ENCODE measurements at regions of chr11 and their contacts with region 1.

Region 1: GRCh38 chr11:10933455-10934292 is 75.8 kb upstream of the ZBED5 start:
- DNase-seq: peak; percentile 92
- ATAC-seq: peak; percentile 84
- H3K4me3 ChIP-seq: peak overlapping the region; percentile 40
- H3K27ac ChIP-seq: peak overlapping the region; percentile 41
- H3K4me1 ChIP-seq: peaks cover 5% of the 10 kb centered on the region
- H3K27me3 ChIP-seq: peaks cover 4% of the 10 kb centered on the region; the same call in 1 of the 2 replicates
- CTCF ChIP-seq: peak; percentile 98
- POLR2A ChIP-seq: peak; percentile 58; the same call in 1 of the 2 replicates
- RAD21 ChIP-seq: peak; percentile 93

Region 2: GRCh38 chr11:10797531-10797930 is 136.1 kb before region 1 on chr11:
- CTCF ChIA-PET with region 1: interaction called, 6 read pairs
- POLR2A ChIA-PET with region 1: no interaction called
- dilution Hi-C with region 1: no loop called
- in situ Hi-C with region 1: loop called (anchors 5 kb)
- intact Hi-C with region 1: loop called (anchors 5 kb)
- DNase-seq: no peak
- ATAC-seq: no peak
- H3K4me3 ChIP-seq: no peak overlapping the region
- H3K27ac ChIP-seq: no peak overlapping the region
- H3K4me1 ChIP-seq: no peaks in the 10 kb centered on the region
- H3K27me3 ChIP-seq: no peaks in the 10 kb centered on the region
- CTCF ChIP-seq: no peak
- POLR2A ChIP-seq: no peak
- RAD21 ChIP-seq: no peak

Region 3: GRCh38 chr11:10857709-10858438 is 75.8 kb before region 1 on chr11 and contains the start of gene ZBED5:
- CTCF ChIA-PET with region 1: interaction called, 3 read pairs
- POLR2A ChIA-PET with region 1: interaction called, 3 read pairs
- dilution Hi-C with region 1: no loop called
- in situ Hi-C with region 1: loop called (anchors 5 kb)
- intact Hi-C with region 1: loop called (anchors 1 kb)
- DNase-seq: peak; percentile 97
- ATAC-seq: peak; percentile 95
- H3K4me3 ChIP-seq: peak within 1 kb of the TSS; percentile 67
- H3K27ac ChIP-seq: peak within 1 kb of the TSS; percentile 95
- H3K4me1 ChIP-seq: no peaks in the 10 kb centered on the region
- H3K27me3 ChIP-seq: no peaks in the 10 kb centered on the region
- CTCF ChIP-seq: 0 out of 2 replicates have a peak, but pooled peaks have one; percentile 7
- POLR2A ChIP-seq: peak; percentile 92
- RAD21 ChIP-seq: peak; percentile 31
- total RNA-seq, gene ZBED5: 30.8 and 35.6 TPM in 2 replicates

Region 4: GRCh38 chr11:10943968-10944367 is 10.3 kb after region 1 on chr11:
- CTCF ChIA-PET with region 1: interaction called, 11 read pairs
- POLR2A ChIA-PET with region 1: no interaction called
- dilution Hi-C with region 1: no loop called
- in situ Hi-C with region 1: no loop called
- intact Hi-C with region 1: no loop called
- DNase-seq: no peak
- ATAC-seq: no peak
- H3K4me3 ChIP-seq: no peak overlapping the region
- H3K27ac ChIP-seq: no peak overlapping the region
- H3K4me1 ChIP-seq: no peaks in the 10 kb centered on the region
- H3K27me3 ChIP-seq: peaks cover 27% of the 10 kb centered on the region
- CTCF ChIP-seq: no peak
- POLR2A ChIP-seq: no peak
- RAD21 ChIP-seq: no peak

Region 5: GRCh38 chr11:11028017-11028692 is 94.5 kb after region 1 on chr11:
- CTCF ChIA-PET with region 1: interaction called, 12 read pairs
- POLR2A ChIA-PET with region 1: no interaction called
- dilution Hi-C with region 1: no loop called
- in situ Hi-C with region 1: no loop called
- intact Hi-C with region 1: no loop called
- DNase-seq: peak; percentile 44
- ATAC-seq: peak; percentile 85
- H3K4me3 ChIP-seq: no peak overlapping the region
- H3K27ac ChIP-seq: no peak overlapping the region
- H3K4me1 ChIP-seq: peaks cover 3% of the 10 kb centered on the region; the same call in 1 of the 2 replicates
- H3K27me3 ChIP-seq: peaks cover 10% of the 10 kb centered on the region
- CTCF ChIP-seq: peak; percentile 72
- POLR2A ChIP-seq: no peak
- RAD21 ChIP-seq: peak; percentile 74

Region 6: DNA sequence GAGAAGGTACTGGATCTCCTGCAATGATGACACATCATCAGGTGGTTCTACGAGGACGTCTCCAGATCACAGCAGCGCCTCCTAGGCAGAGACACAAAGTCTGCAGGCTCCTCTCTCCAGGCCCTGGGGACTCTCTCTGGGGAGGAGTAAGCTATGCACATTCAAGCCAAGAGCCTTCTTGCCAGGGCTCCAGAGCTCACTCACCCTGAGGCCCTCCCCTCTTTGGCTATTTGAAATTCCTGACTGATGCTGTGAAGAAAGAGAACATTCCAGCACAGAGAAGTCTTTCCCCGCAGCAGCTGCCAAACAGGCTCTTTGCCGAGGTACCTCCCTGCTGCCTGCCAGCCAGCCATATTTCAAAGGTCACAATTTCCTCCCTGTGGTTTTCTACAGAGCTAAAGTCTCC is 214.4 kb after region 1 on chr11:
- CTCF ChIA-PET with region 1: no interaction called
- POLR2A ChIA-PET with region 1: no interaction called
- dilution Hi-C with region 1: no loop called
- in situ Hi-C with region 1: no loop called
- intact Hi-C with region 1: loop called (anchors 10 kb)
- DNase-seq: peak; percentile 74
- ATAC-seq: peak; percentile 100
- H3K4me3 ChIP-seq: no peak overlapping the region
- H3K27ac ChIP-seq: 0 out of 2 replicates have a peak overlapping the region, but pooled peaks have one; percentile 1
- H3K4me1 ChIP-seq: 0 out of 2 replicates have a peak, but pooled peaks cover 3% of the 10 kb centered on the region
- H3K27me3 ChIP-seq: peaks cover 22% of the 10 kb centered on the region
- CTCF ChIP-seq: peak; percentile 35; the same call in 1 of the 2 replicates
- POLR2A ChIP-seq: no peak
- RAD21 ChIP-seq: no peak